ENCODE measurements at regions of chr2 and their contacts with region 1.

Region 1: DNA sequence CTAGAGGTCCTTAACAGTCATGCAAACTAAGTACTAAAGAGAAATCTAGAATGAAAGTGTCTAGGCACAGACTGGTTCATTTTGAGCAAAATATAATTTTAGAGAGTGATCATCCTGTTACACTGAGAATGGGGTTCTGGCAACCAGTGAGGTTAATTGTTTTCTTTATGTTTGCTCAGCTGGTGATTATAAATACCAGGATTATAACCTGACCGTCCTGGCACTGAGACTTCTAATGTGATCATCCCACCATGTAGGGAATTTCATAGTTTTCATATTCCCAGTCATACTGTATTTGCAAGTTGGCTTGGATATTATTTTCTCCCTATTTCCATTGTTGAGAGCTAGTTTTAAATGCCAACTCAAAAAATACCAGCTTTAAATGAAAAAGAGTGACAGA is 852.5 kb upstream of the LRATD1 start:
- DNase-seq: no peak
- ATAC-seq: no peak
- H3K4me3 ChIP-seq: no peak overlapping the region
- H3K27ac ChIP-seq: no peak overlapping the region
- H3K4me1 ChIP-seq: no peaks in the 10 kb centered on the region
- H3K27me3 ChIP-seq: no peaks in the 10 kb centered on the region
- CTCF ChIP-seq: no peak
- POLR2A ChIP-seq: no peak

Region 2: DNA sequence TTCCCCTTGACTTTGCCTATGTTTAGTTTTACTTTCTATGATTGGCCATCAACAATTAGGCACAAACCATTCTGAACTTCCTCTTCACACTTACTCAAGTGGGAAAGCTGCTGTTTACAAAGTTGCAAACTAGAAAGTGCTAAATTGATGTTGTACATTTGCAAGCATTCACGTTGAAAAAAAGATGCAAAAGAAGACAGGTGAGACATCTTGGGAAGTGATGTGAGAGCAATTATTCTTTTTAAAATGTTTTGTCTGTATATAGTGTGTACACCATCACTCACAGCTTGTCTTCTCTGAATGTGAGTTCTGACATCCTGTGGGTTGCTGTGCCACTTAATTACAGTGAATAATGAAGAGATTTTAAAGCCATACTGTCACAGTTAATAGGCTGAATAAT is 21.6 kb before region 1 on chr2:
- intact Hi-C with region 1: loop called in 1 of 10 experiments (anchors 2 kb)
- DNase-seq: no peak
- ATAC-seq: no peak
- H3K4me3 ChIP-seq: no peak overlapping the region
- H3K27ac ChIP-seq: no peak overlapping the region
- H3K4me1 ChIP-seq: no peaks in the 10 kb centered on the region
- H3K27me3 ChIP-seq: no peaks in the 10 kb centered on the region
- CTCF ChIP-seq: no peak
- POLR2A ChIP-seq: no peak

Region 3: GRCh38 chr2:14148216-14148615 is 368.2 kb after region 1 on chr2:
- intact Hi-C with region 1: no loop called
- DNase-seq: no peak
- ATAC-seq: no peak
- H3K4me3 ChIP-seq: no peak overlapping the region
- H3K27ac ChIP-seq: no peak overlapping the region
- H3K4me1 ChIP-seq: no peaks in the 10 kb centered on the region
- H3K27me3 ChIP-seq: no peaks in the 10 kb centered on the region
- CTCF ChIP-seq: no peak
- POLR2A ChIP-seq: no peak